Heart right ventricle (tissue), 16 donors: ENCODE measurements at regions of chr17 and their contacts with region 1.

Region 1: GRCh38 chr17:70552230-70552981 is 383.1 kb downstream of the KCNJ2 start:
- DNase-seq: peak in 1 of 2 donors; percentile 8
- ATAC-seq: peak; percentile 55 to 83 (median 66)
- H3K4me3 ChIP-seq: peak overlapping the region in 3 of 10 donors; percentile 8 to 22 (median 20)
- H3K27ac ChIP-seq: peak overlapping the region in 2 of 10 donors; percentile 10 to 29
- H3K4me1 ChIP-seq: peaks cover 0 to 4% (median 0%) of the 10 kb centered on the region in 9 donors
- H3K27me3 ChIP-seq: no peaks in the 10 kb centered on the region
- CTCF ChIP-seq: peak; percentile 34 to 72 (median 60)

Region 2: GRCh38 chr17:69523244-69523861 is 1029.1 kb before region 1 on chr17:
- intact Hi-C with region 1: loop called in 3 of 10 experiments (anchors 5 kb)
- DNase-seq: peak in 1 of 2 donors; percentile 21
- ATAC-seq: peak in 5 of 8 donors; percentile 61 to 75 (median 65)
- H3K4me3 ChIP-seq: peak overlapping the region in 1 of 10 donors; percentile 6
- H3K27ac ChIP-seq: no peak overlapping the region
- H3K4me1 ChIP-seq: peaks cover 0 to 6% (median 0%) of the 10 kb centered on the region in 9 donors
- H3K27me3 ChIP-seq: no peaks in the 10 kb centered on the region
- CTCF ChIP-seq: peak; percentile 48 to 73 (median 69)

Region 3: GRCh38 chr17:69575346-69575761 is 977.1 kb before region 1 on chr17:
- intact Hi-C with region 1: loop called in 1 of 10 experiments (anchors 10 kb)
- DNase-seq: peak in 1 of 2 donors; percentile 15
- ATAC-seq: peak in 7 of 8 donors; percentile 29 to 81 (median 66)
- H3K4me3 ChIP-seq: no peak overlapping the region
- H3K27ac ChIP-seq: peak overlapping the region in 9 of 10 donors; percentile 1 to 54 (median 29)
- H3K4me1 ChIP-seq: peaks cover 0 to 29% (median 19%) of the 10 kb centered on the region in 9 donors
- H3K27me3 ChIP-seq: no peaks in the 10 kb centered on the region
- CTCF ChIP-seq: no peak

Region 4: GRCh38 chr17:69607162-69607834 is 945.1 kb before region 1 on chr17:
- intact Hi-C with region 1: loop called in 4 of 10 experiments (anchors 5 to 10 kb)
- DNase-seq: peak; percentile 65 to 78
- ATAC-seq: peak; percentile 78 to 92 (median 87)
- H3K4me3 ChIP-seq: no peak overlapping the region
- H3K27ac ChIP-seq: peak overlapping the region; percentile 5 to 82 (median 50)
- H3K4me1 ChIP-seq: peaks cover 15 to 40% (median 35%) of the 10 kb centered on the region in 9 donors
- H3K27me3 ChIP-seq: no peaks in the 10 kb centered on the region
- CTCF ChIP-seq: peak; percentile 74 to 92 (median 88)

Region 5: DNA sequence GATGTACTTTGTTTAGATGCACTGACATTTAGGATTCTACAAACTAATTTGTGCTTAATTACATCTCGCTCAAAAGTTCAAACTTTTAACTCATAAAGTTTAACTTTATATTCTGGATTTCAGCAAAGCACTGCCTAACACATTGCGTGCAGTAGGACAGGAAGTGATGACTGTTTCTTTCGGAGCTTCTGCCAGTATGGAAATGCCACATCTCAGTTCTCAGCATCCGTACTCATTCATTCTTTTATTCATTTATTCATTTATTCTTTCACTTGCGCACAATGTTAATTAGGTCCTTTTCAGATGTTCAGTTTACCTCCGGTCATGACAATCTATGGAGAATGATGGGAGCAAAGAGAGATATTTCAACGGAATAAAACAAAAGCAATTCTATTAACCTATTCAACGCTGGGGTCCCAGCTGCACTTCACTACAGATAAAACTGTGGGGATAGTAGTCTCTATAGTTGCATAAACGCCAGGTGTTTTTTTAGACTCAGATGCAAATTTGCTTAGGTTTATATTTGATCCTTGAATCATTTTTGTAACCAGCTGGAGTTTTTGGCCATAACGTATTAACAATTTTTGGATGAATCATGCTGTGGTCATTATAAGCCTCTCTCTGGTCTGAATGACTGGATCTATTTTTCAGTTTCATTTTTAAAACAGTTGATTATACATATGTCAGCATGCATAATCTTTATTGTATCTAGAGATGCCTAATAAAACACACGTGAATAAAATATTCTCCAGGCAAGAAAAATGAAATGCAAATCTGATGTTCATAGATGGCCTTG is 239.2 kb before region 1 on chr17:
- intact Hi-C with region 1: loop called in 3 of 10 experiments (anchors 5 to 10 kb)
- DNase-seq: no peak
- ATAC-seq: no peak
- H3K4me3 ChIP-seq: no peak overlapping the region
- H3K27ac ChIP-seq: peak overlapping the region in 1 of 10 donors; percentile 80
- H3K4me1 ChIP-seq: peaks cover 0 to 27% (median 0%) of the 10 kb centered on the region in 9 donors
- H3K27me3 ChIP-seq: no peaks in the 10 kb centered on the region
- CTCF ChIP-seq: no peak